Psoas muscle (tissue), 8 donors: ENCODE measurements at regions of chr1 and their contacts with region 1.

Region 1: DNA sequence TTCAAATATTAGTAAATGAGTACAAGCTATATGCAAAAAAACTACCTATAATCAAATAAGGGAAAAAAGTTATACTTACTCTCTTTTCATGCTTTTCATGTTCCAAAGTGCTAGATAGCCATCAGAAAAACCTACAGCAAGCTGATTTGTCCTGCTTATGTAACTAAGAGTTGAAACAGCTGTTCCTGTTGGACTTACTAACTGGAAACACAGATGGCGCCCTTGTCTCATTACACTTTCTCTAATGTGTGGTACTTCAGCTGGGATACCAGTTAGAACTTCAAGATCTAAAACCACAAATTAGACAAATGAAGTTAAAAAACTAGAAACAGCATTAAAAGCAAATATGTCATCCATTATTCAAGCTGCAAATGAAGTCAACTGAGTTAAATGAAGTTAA is 24.3 kb downstream of the AHCTF1 start:
- DNase-seq: no peak
- ATAC-seq: peak; percentile 68 to 91 (median 79)
- H3K4me3 ChIP-seq: no peak overlapping the region
- H3K27ac ChIP-seq: no peak overlapping the region
- H3K4me1 ChIP-seq: peaks cover 5% of the 10 kb centered on the region
- H3K27me3 ChIP-seq: no peaks in the 10 kb centered on the region
- CTCF ChIP-seq: peak; percentile 45

Region 2: DNA sequence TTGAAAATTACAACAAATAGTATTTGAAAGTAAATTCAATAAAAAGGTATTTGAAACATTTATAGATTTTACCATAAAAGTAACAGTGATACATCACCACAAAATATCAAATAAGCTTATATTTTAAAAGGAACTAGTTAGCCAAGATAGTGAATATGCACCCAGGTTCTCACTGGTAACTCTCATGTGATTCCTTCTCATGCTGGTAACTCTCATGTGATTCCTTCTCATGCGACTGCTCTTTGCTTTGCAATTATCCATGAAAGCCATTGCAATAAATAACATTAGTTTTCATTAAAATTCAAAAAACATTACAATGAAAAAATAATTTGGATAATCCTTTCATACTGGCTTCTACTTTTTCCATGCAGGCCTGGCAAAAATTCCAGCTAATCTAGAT is 51.1 kb before region 1 on chr1:
- intact Hi-C with region 1: loop called in 1 of 2 experiments (anchors 10 kb)
- DNase-seq: no peak
- ATAC-seq: no peak
- H3K4me3 ChIP-seq: no peak overlapping the region
- H3K27ac ChIP-seq: no peak overlapping the region
- H3K4me1 ChIP-seq: no peaks in the 10 kb centered on the region
- H3K27me3 ChIP-seq: no peaks in the 10 kb centered on the region
- CTCF ChIP-seq: no peak

Region 3: GRCh38 chr1:246971090-246971721 is 63.7 kb after region 1 on chr1:
- intact Hi-C with region 1: loop called (anchors 2 to 5 kb)
- DNase-seq: peak; percentile 62 to 71
- ATAC-seq: peak in 1 of 4 donors; percentile 71
- H3K4me3 ChIP-seq: peak overlapping the region; percentile 40
- H3K27ac ChIP-seq: no peak overlapping the region
- H3K4me1 ChIP-seq: no peaks in the 10 kb centered on the region
- H3K27me3 ChIP-seq: no peaks in the 10 kb centered on the region
- CTCF ChIP-seq: peak; percentile 89